ENCODE measurements at regions of chr21 and their contacts with region 1.

Region 1: GRCh38 chr21:16082038-16082816 is 352.4 kb downstream of the USP25 start:
- H3K4me3 ChIP-seq: no peak overlapping the region
- H3K27ac ChIP-seq: no peak overlapping the region
- H3K4me1 ChIP-seq: peaks cover 17% of the 10 kb centered on the region
- CTCF ChIP-seq: no peak

Region 2: GRCh38 chr21:16096988-16097387 is 14.8 kb after region 1 on chr21:
- CTCF ChIA-PET with region 1: interaction called, 11 read pairs
- POLR2A ChIA-PET with region 1: no interaction called
- H3K4me3 ChIP-seq: no peak overlapping the region
- H3K27ac ChIP-seq: no peak overlapping the region
- H3K4me1 ChIP-seq: no peaks in the 10 kb centered on the region
- CTCF ChIP-seq: no peak

Region 3: DNA sequence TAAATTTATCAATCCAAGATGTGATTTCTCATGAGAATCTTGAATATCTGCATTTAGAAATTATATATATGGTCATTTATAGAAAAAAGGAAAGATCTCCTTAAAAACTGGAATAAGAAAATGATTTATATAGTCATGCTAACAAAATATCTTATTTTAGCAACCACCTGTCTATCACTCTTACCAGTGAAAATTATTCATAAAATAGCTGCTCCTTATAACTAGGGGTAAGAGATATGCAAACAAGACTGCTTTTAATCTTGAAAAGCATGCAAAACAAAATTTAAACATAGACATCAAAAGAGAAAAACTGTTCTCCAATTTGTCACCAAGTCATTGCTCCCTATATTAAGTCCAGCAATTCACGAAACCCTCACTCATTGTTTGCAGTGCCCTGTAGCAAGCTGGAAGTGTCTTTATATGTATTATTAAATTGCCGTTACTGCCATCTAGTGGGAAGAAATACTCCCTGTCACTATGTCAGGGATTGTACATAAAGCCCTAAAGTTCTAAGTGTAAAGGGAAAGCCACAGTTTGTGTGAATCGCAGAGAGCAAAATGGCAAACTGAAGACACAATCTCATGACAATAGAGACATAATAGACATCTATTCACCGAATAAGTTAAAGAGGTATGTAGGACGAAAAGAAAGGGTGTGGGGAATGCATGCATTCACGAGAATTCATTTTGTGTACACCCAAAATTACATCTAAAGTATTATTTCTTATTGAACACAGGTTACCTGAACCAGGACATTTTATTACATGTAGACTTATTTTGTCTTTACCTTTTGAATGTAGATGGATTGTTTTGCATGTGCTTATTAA is 248.1 kb after region 1 on chr21:
- CTCF ChIA-PET with region 1: interaction called, 31 read pairs
- POLR2A ChIA-PET with region 1: no interaction called
- H3K4me3 ChIP-seq: no peak overlapping the region
- H3K27ac ChIP-seq: no peak overlapping the region
- H3K4me1 ChIP-seq: no peaks in the 10 kb centered on the region
- CTCF ChIP-seq: no peak

Measured in HEK293 (cell line).